Prostate gland (tissue), 2 donors: ENCODE measurements at regions of chr2 and their contacts with region 1.

Region 1: GRCh38 chr2:191013932-191014652 is at the start of gene STAT1:
- DNase-seq: peak; percentile 89
- H3K4me3 ChIP-seq: peak within 1 kb of the TSS; percentile 83 to 99
- H3K27ac ChIP-seq: peak within 1 kb of the TSS; percentile 92 to 94
- H3K4me1 ChIP-seq: peaks cover 2% of the 10 kb centered on the region
- H3K27me3 ChIP-seq: no peaks in the 10 kb centered on the region
- CTCF ChIP-seq: peak in 1 of 4 experiments; percentile 43
- POLR2A ChIP-seq: peak; percentile 86
- total RNA-seq, gene STAT1: 53.3 to 64.1 TPM

Region 2: GRCh38 chr2:190880378-190881073 is 133.6 kb before region 1 on chr2 and contains the start of gene GLS:
- intact Hi-C with region 1: loop called (anchors 5 kb)
- DNase-seq: peak; percentile 97
- H3K4me3 ChIP-seq: peak within 1 kb of the TSS; percentile 83 to 94
- H3K27ac ChIP-seq: peak within 1 kb of the TSS; percentile 92 to 93
- H3K4me1 ChIP-seq: peaks cover 3% of the 10 kb centered on the region
- H3K27me3 ChIP-seq: no peaks in the 10 kb centered on the region
- CTCF ChIP-seq: no peak
- POLR2A ChIP-seq: peak; percentile 90
- total RNA-seq, gene GLS: 30.6 to 74.9 TPM

Region 3: GRCh38 chr2:191066197-191066918 is 52.3 kb after region 1 on chr2:
- intact Hi-C with region 1: no loop called
- DNase-seq: no peak
- H3K4me3 ChIP-seq: no peak overlapping the region
- H3K27ac ChIP-seq: no peak overlapping the region
- H3K4me1 ChIP-seq: no peaks in the 10 kb centered on the region
- H3K27me3 ChIP-seq: no peaks in the 10 kb centered on the region
- CTCF ChIP-seq: no peak
- POLR2A ChIP-seq: no peak